Activated CD4-positive, alpha-beta memory T cell treated with anti-CD3 and anti-CD28 coated beads for 36 hours (primary cell): ENCODE measurements at regions of chr16 and their contacts with region 1.

Region 1: DNA sequence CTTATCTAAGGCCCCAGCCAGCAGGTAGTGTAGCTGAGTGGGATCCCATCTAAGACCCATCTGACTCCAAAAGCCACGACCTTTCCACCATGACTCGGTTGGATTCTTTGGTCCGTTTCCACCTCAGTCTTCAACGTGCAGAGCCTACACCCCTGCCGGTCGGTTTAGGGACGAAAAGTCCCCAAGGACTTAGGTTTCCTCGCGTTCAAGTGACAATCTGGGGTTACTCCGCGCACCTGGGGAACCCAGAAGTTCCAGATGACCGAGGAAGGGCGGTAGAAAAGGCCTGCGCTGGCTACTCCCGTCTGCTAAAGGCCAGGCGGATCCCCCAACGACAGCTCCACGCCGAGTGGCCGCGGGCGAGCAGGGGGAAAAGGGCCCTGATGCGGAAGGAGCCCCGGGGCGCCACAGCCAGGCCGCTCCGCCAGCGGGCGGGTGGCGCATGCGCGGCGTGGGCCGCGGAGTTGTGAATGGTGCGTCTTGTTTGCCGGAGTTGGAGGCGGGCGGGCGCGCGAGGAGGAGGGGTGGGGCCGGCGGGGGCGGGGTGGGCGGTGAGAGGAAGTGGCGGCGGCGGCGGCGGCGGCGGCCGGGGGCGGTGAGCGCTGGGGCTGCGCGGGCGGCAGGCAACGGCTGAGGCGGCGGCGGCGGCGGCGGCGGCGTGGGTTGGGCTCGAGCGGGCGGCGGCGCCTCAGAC is at the start of gene CBFB:
- DNase-seq: peak; percentile 94
- H3K4me3 Mint-ChIP-seq: peak within 1 kb of the TSS; percentile 89
- H3K27ac Mint-ChIP-seq: peak within 1 kb of the TSS; percentile 93
- H3K4me1 Mint-ChIP-seq: peaks cover 39% of the 10 kb centered on the region
- H3K27me3 Mint-ChIP-seq: no peaks in the 10 kb centered on the region
- total RNA-seq, gene CBFB: 155 to 163 TPM

Region 2: GRCh38 chr16:66924527-66925321 is 104.0 kb before region 1 on chr16:
- CTCF ChIA-PET with region 1: no interaction called
- POLR2A ChIA-PET with region 1: no interaction called
- intact Hi-C with region 1: no loop called
- DNase-seq: peak; percentile 65
- H3K4me3 Mint-ChIP-seq: peak overlapping the region; percentile 20
- H3K27ac Mint-ChIP-seq: no peak overlapping the region
- H3K4me1 Mint-ChIP-seq: peaks cover 11% of the 10 kb centered on the region
- H3K27me3 Mint-ChIP-seq: peaks cover 30% of the 10 kb centered on the region

Region 3: GRCh38 chr16:67040906-67041305 is 12.2 kb after region 1 on chr16:
- CTCF ChIA-PET with region 1: interaction called, 10 read pairs
- POLR2A ChIA-PET with region 1: interaction called, 6 read pairs
- intact Hi-C with region 1: no loop called
- DNase-seq: no peak
- H3K4me3 Mint-ChIP-seq: no peak overlapping the region
- H3K27ac Mint-ChIP-seq: peak overlapping the region; percentile 5
- H3K4me1 Mint-ChIP-seq: peaks cover 43% of the 10 kb centered on the region
- H3K27me3 Mint-ChIP-seq: no peaks in the 10 kb centered on the region

Region 4: DNA sequence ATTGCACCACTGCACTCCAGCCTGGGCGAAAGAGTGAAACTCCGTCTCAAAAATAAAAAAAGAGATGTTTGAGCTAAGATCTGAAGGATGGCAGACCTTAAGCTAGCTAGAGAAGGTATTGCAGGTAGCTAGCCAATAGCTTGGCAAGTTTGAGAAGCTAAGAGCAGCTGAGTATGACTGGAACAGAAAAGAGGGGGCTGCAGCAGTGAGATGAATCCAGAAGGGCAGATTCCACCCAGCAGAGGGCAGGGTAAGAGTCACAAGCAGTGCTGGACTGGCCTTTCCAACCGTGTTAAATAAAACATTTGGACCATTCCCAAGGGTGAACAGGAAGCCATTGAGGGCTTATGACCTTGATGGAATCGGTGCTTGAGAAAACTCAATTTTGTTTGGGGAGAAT is 75.4 kb after region 1 on chr16:
- CTCF ChIA-PET with region 1: interaction called, 12 read pairs
- POLR2A ChIA-PET with region 1: interaction called, 5 read pairs
- intact Hi-C with region 1: no loop called
- DNase-seq: no peak
- H3K4me3 Mint-ChIP-seq: peak overlapping the region; percentile 0
- H3K27ac Mint-ChIP-seq: no peak overlapping the region
- H3K4me1 Mint-ChIP-seq: peaks cover 7% of the 10 kb centered on the region
- H3K27me3 Mint-ChIP-seq: no peaks in the 10 kb centered on the region